ENCODE measurements at regions of chr12 and their contacts with region 1.

Region 1: DNA sequence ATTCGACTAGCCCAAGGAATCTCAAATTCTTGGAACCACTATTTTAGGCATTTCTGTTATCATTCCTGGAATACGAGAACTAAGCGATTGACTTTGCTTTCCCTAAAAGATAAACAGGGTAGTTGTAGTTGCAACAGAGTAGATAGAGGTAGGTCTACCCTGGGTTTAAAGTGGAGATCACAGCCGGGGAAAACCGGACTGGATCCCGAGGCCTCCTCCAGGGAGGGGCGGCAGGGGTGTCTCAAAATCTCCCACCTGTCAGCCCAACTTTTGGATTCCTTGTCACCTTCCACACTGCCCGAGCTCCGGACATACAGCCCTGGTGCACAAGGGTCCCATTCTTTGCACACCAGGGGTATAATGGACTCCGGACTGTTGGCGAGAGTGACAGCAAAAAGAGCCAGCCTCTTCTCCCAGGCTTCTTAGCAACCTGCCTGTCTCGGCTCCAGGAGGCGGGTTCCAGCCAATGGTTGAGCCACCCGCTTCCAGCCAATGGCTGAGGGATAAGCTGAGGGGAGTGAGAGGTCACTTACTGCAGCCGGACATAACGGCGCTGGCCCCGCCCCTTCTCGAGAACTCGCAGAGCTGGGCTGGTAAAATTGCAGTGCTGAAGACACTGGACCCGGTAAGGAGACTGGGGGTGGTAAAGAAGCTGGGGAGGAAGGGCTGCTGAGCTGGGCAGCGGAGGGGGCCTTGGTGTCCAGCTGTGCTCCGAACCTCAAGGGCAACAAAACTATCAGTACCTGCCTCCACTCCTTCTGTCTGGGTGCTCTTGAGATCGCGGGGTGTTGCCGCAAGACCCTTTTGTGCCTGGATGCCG is at the start of gene SUOX:
- H3K4me3 Mint-ChIP-seq: peak within 1 kb of the TSS; percentile 93
- H3K27ac Mint-ChIP-seq: peak within 1 kb of the TSS; percentile 88
- H3K4me1 Mint-ChIP-seq: peaks cover 48% of the 10 kb centered on the region
- H3K27me3 Mint-ChIP-seq: no peaks in the 10 kb centered on the region

Region 2: DNA sequence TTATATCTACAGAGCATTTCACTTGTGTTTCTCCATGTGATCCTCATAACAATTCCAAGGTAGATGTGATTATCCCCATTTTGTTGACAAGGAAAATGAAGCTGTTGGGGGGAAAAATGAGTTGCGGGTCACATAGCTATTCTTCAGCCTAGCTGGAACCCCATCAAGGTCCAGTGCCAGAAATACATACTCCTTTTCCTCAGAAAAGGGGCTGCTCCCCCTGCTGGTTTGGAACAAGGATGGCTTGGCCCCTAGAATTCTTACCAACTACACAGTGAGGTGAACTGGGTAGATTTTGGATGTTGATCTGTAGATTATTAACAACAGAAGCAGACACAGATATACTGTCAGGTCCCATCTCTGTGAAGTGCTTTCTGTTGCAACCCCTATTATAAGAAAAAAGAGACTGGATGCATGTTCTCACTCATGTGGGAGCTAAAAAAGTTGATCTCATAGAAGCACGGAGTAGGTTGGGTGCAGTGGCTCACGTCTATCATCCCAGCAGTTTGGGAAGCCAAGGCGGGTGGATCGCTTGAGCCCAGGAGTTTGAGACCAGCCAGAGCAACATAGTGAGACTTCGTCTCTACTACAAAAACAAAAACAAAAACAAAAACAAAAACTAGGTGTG is 32.9 kb after region 1 on chr12:
- intact Hi-C with region 1: loop called (anchors 1 kb)
- H3K4me3 Mint-ChIP-seq: no peak overlapping the region
- H3K27ac Mint-ChIP-seq: no peak overlapping the region
- H3K4me1 Mint-ChIP-seq: peaks cover 6% of the 10 kb centered on the region
- H3K27me3 Mint-ChIP-seq: no peaks in the 10 kb centered on the region

Region 3: GRCh38 chr12:56041552-56042429 is 44.9 kb after region 1 on chr12 and contains the start of gene RPS26:
- intact Hi-C with region 1: loop called (anchors 2 kb)
- H3K4me3 Mint-ChIP-seq: peak within 1 kb of the TSS; percentile 95
- H3K27ac Mint-ChIP-seq: peak within 1 kb of the TSS; percentile 97
- H3K4me1 Mint-ChIP-seq: peaks cover 10% of the 10 kb centered on the region
- H3K27me3 Mint-ChIP-seq: no peaks in the 10 kb centered on the region